ENCODE measurements at regions of chr3 and their contacts with region 1.

Region 1: DNA sequence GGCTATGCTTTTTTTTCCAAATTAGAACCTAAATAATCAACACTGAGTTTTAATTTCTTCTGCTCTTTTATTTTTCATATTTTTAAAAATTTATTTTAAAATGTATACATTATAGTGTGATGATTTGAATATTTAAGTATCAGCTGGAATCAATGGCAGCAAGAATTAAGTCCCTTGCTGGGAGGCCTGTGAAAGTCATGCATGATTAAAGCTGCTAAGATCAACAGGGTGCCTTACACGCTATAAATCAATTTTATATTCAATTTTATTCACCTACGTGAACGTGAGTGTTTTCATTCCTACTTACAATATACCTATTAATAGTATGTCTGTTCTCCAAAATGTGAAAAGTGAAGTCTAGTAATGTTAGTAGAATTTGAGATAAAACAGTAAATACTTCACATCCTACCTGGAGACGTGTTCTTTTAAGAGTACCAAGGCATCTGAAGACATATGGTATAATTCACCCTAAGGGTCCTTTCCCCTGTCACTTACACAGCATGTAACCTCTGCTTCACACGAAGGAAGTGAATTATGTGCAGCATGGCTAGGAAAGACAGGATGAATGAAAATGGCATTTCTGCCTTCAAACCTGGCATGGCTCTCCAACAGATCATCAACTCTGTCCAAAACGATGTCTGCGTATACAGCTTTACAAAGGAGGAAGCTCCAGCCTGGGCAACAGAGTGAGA is 640.4 kb upstream of the ROBO1 start:
- DNase-seq: no peak
- ATAC-seq: no peak
- H3K4me3 ChIP-seq: no peak overlapping the region
- H3K4me3 Mint-ChIP-seq: no peak overlapping the region
- H3K27ac ChIP-seq: no peak overlapping the region
- H3K27ac Mint-ChIP-seq: no peak overlapping the region
- H3K4me1 ChIP-seq: no peaks in the 10 kb centered on the region
- H3K4me1 Mint-ChIP-seq: no peaks in the 10 kb centered on the region
- H3K27me3 ChIP-seq: no peaks in the 10 kb centered on the region
- H3K27me3 Mint-ChIP-seq: no peaks in the 10 kb centered on the region
- CTCF ChIP-seq: no peak

Region 2: DNA sequence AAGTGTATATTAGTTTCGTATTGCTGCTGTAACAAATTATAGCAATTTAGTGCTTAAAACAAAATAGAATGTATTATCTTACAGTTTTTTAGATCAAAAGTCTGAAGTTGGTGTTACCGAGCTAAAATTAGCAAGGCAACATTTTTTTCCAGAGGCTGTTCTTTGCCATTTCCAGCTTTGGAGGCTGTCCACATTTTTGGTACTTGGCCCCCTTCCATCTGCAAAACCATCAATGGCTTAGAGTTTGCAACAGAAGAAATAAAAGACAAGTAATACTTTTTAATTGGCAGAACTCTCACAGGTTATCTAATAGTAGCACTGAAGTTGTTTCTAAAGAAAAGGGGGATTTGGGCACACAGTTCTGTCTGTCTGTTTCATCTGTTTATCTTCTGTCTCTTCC is 1888.9 kb before region 1 on chr3:
- CTCF ChIA-PET with region 1: no interaction called
- POLR2A ChIA-PET with region 1: no interaction called
- intact Hi-C with region 1: loop called in 1 of 2 experiments (anchors 10 kb)
- DNase-seq: no peak
- ATAC-seq: no peak
- H3K4me3 ChIP-seq: no peak overlapping the region
- H3K4me3 Mint-ChIP-seq: no peak overlapping the region
- H3K27ac ChIP-seq: no peak overlapping the region
- H3K27ac Mint-ChIP-seq: no peak overlapping the region
- H3K4me1 ChIP-seq: no peaks in the 10 kb centered on the region
- H3K4me1 Mint-ChIP-seq: no peaks in the 10 kb centered on the region
- H3K27me3 ChIP-seq: no peaks in the 10 kb centered on the region
- H3K27me3 Mint-ChIP-seq: no peaks in the 10 kb centered on the region
- CTCF ChIP-seq: no peak

Region 3: DNA sequence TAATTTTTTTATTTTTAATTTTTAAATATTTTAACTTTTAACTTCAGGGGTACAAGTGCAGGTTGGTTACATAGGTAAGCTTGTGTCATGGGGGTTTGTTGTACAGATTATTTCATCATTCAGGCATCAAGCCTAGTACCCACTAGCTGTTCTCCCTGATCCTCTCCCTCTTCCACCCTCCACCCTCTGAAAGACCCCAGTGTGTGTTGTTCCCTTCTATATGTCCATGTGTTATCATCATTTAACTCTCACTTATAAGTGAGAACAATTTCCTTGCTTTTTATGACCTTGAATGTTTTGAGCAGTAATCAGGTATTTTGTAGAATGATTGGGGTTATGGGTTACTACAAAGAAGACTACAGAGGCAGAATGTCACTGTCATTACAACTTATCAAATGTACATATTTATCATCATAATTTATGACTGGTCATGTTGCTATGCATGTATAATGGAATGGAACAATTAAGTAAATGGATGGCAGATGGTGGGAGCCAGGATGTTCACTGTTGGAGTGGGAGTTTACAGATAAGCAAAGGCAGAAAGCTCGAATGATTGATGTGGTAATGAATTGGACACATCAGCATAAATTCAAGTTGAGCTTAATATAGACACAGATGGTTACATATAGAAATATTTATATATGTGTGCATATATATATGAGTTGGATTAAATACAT is 76.5 kb before region 1 on chr3:
- CTCF ChIA-PET with region 1: no interaction called
- POLR2A ChIA-PET with region 1: no interaction called
- intact Hi-C with region 1: no loop called
- DNase-seq: no peak
- ATAC-seq: no peak
- H3K4me3 ChIP-seq: no peak overlapping the region
- H3K4me3 Mint-ChIP-seq: no peak overlapping the region
- H3K27ac ChIP-seq: no peak overlapping the region
- H3K27ac Mint-ChIP-seq: no peak overlapping the region
- H3K4me1 ChIP-seq: no peaks in the 10 kb centered on the region
- H3K4me1 Mint-ChIP-seq: no peaks in the 10 kb centered on the region
- H3K27me3 ChIP-seq: no peaks in the 10 kb centered on the region
- H3K27me3 Mint-ChIP-seq: no peaks in the 10 kb centered on the region
- CTCF ChIP-seq: no peak